ENCODE measurements at regions of chr3 and their contacts with region 1.

Region 1: DNA sequence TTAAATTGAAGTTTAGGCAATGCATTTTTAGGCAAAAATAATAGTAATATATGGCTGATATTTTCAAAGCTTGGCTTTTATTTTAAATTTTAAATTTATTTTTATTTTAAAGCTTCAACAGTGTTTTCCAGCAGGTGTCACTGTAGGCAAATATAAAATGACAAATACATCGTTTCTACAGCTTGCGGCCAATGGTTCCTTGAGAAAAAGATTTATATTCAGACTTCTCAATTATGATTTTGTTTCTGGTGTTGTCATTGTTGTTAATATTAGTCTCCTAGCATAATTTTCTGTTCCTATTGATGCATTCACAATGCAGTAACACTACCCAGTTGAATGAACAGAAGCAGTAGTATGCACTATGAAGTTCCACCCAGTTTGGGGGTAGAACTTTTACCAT is 220.7 kb upstream of the DNAJC19 start:
- DNase-seq: no peak

Region 2: GRCh38 chr3:181183764-181184163 is 26.5 kb before region 1 on chr3:
- intact Hi-C with region 1: no loop called
- DNase-seq: no peak

Region 3: GRCh38 chr3:181278468-181279238 is 68.4 kb after region 1 on chr3:
- intact Hi-C with region 1: loop called (anchors 1 kb)
- DNase-seq: no peak

Region 4: GRCh38 chr3:181700168-181701087 is 490.2 kb after region 1 on chr3:
- intact Hi-C with region 1: loop called (anchors 5 kb)
- DNase-seq: peak in 8 of 10 donors; percentile 62 to 96 (median 78)

Region 5: GRCh38 chr3:182258538-182259177 is 1048.4 kb after region 1 on chr3:
- intact Hi-C with region 1: loop called (anchors 5 kb)
- DNase-seq: no peak

Region 6: DNA sequence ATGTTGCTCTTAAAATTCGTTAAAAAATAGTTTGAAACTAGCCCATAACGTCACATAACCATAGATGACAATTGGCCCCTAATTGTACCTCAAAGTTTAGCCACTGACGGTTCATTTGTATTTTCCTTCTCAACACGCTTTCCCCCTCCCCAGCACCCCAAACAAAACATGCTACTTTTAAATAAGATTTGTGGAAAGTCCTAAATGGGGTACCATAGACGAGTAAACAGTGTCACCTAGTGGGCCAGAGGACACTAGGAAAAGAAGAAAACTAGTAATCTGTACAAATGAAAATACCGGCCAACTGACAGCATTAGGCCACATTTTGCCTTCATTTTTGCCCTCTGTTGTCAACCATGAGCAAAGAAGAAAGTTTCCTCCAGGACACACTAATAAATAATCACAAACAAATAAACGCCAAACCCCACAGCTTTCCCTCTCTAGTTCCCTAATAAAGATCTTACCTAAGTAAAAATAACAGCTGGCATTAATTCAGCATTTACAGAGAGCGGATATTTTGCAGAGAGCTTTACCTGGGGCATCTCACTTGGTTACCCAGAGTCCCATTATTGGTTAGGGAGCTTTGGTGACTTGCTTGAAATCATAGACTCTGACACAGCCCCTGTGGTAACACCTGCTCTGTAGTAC is 1407.9 kb after region 1 on chr3:
- intact Hi-C with region 1: loop called (anchors 2 kb)
- DNase-seq: peak in 1 of 10 donors; percentile 23

Region 7: DNA sequence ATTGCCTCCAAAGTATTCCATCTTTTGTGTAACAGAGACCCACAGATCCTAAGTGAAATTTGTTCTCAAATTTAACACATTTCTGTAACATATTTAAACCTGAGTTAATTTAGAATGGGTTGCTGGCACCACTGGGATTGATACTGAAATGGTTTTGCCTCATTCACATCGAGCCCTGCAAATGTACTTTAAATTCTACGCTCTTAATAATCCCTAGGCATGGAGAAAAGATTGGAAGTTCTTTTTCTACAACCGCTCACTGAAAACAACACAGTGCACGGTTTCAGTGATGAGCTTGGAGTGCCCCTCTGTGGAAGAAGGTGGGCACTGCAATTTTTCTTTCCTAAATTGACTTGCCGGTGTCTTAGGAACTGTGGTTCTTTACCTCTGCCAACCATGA is 1473.2 kb after region 1 on chr3:
- intact Hi-C with region 1: loop called (anchors 5 kb)
- DNase-seq: peak in 8 of 10 donors; percentile 36 to 92 (median 75)

Measured in posterior cingulate gyrus (tissue), 11 donors.